ENCODE measurements at regions of chr2 and their contacts with region 1.

Region 1: GRCh38 chr2:27071277-27071989 is at the start of gene OST4:
- DNase-seq: peak; percentile 56
- H3K4me3 ChIP-seq: peak within 1 kb of the TSS; percentile 91
- CTCF ChIP-seq: no peak

Region 2: GRCh38 chr2:27059141-27059820 is 12.2 kb before region 1 on chr2:
- CTCF ChIA-PET with region 1: interaction called, 7 read pairs
- POLR2A ChIA-PET with region 1: interaction called, 16 read pairs
- DNase-seq: no peak
- H3K4me3 ChIP-seq: no peak overlapping the region
- CTCF ChIP-seq: no peak

Region 3: DNA sequence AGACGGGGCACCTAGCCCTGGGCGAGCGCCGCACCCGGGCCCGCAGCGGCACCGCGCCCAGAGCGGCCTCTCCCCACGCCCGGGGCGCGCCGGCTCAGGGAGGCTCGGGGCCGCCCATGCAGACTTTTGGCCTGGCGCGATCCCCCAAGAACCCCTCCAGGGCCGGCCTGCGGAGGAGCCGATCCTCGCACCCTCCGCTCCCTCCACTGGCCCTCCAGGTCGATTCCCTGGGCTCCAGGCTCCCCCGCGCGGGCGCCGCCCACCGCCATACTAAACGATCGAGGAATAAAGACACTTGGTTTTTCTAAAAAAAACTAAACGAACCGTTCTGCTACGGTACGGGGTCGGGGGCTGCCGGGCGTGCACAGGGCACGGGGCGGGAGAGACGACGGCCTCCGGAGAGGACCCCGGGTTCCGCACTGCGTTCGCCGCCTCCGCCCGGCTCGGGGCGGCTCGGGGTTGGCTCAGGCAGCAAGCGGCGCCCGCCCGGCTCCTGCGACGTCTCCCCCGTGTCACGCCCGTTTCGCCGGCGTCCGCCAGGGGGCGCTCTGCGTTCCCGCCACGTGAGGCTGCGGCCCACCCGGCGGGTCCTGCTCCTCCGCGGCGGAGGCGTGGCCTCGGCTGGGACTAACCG is 14.8 kb after region 1 on chr2:
- CTCF ChIA-PET with region 1: interaction called, 40 read pairs
- POLR2A ChIA-PET with region 1: interaction called, 28 read pairs
- DNase-seq: no peak
- H3K4me3 ChIP-seq: peak overlapping the region; percentile 42
- CTCF ChIP-seq: peak; percentile 94